ENCODE measurements at regions of chr21 and their contacts with region 1.

Region 1: GRCh38 chr21:42309753-42310221 is 5.4 kb downstream of the TFF3 start:
- DNase-seq: peak; percentile 30
- H3K4me3 ChIP-seq: no peak overlapping the region
- H3K27ac ChIP-seq: no peak overlapping the region
- H3K4me1 ChIP-seq: no peaks in the 10 kb centered on the region
- H3K27me3 ChIP-seq: peaks cover 2 to 6% of the 10 kb centered on the region in 2 experiments
- CTCF ChIP-seq: peak; percentile 71 to 88
- POLR2A ChIP-seq: no peak

Region 2: DNA sequence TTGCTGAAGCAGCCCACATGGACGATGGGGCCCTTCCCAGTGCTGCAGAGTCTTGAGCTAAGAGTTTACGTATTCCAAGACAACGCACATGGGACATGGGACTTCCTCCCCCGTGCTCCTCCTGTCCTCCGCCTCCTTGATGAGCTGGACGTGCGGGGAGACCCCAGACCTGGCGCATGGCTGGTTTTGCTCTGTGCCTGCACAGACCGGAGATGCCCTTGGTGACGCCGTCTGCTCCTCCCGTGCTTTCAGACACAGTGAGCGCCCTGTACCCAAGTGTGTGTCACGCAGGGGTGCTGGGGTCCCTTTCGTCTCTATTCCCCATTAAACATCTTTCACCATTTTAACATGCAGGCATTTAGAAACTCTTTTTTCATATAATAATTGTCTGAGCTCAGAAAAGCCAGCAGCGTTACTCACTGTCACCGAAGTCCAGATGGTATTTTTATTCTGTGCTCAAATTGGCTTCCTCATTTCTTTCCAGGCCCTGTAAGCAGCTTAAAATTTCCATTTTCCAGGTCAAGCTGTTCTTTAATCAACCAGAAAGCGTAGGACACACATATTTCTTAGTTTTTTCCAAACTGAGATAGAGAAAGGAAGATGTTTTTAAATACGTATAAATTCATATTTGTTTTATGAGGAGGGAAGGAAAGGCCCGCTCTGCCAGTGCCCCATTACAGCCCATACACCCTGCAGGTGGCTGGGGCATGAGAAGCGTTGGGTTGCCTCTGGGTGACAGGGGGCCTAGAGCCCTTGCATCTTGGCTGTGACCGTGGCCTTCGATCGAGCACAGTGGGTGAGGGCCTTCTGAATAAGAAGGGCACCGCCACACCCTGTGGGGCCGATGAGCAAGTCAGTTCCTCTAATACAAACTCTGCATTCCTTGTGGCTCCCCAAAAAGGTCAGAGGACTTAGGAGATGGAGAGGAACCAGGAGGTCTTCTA is 281.7 kb before region 1 on chr21:
- CTCF ChIA-PET with region 1: no interaction called
- POLR2A ChIA-PET with region 1: no interaction called
- dilution Hi-C with region 1: no loop called
- intact Hi-C with region 1: no loop called
- DNase-seq: no peak
- H3K4me3 ChIP-seq: no peak overlapping the region
- H3K27ac ChIP-seq: no peak overlapping the region
- H3K4me1 ChIP-seq: peaks cover 5% of the 10 kb centered on the region
- H3K27me3 ChIP-seq: peaks cover 0 to 5% of the 10 kb centered on the region in 2 experiments
- CTCF ChIP-seq: no peak
- POLR2A ChIP-seq: no peak

Region 3: DNA sequence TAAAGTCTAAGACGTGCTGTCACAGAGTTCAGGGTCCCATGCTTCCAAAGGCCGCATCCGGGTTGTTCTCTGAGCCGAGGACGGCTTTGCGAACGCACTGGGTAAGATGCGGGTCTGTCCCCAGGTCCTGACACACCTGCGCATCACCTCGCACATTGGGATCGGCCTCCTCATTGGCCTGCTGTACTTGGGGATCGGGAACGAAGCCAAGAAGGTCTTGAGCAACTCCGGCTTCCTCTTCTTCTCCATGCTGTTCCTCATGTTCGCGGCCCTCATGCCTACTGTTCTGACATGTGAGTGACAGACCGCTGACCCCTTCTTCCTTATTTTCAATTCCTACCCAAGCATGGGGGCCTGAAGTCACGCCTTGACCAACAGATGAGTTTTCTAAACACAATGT is 19.9 kb before region 1 on chr21:
- CTCF ChIA-PET with region 1: interaction called, 14 read pairs
- POLR2A ChIA-PET with region 1: no interaction called
- dilution Hi-C with region 1: no loop called
- intact Hi-C with region 1: no loop called
- DNase-seq: no peak
- H3K4me3 ChIP-seq: no peak overlapping the region
- H3K27ac ChIP-seq: no peak overlapping the region
- H3K4me1 ChIP-seq: no peaks in the 10 kb centered on the region
- H3K27me3 ChIP-seq: no peaks in the 10 kb centered on the region
- CTCF ChIP-seq: no peak
- POLR2A ChIP-seq: no peak

Region 4: DNA sequence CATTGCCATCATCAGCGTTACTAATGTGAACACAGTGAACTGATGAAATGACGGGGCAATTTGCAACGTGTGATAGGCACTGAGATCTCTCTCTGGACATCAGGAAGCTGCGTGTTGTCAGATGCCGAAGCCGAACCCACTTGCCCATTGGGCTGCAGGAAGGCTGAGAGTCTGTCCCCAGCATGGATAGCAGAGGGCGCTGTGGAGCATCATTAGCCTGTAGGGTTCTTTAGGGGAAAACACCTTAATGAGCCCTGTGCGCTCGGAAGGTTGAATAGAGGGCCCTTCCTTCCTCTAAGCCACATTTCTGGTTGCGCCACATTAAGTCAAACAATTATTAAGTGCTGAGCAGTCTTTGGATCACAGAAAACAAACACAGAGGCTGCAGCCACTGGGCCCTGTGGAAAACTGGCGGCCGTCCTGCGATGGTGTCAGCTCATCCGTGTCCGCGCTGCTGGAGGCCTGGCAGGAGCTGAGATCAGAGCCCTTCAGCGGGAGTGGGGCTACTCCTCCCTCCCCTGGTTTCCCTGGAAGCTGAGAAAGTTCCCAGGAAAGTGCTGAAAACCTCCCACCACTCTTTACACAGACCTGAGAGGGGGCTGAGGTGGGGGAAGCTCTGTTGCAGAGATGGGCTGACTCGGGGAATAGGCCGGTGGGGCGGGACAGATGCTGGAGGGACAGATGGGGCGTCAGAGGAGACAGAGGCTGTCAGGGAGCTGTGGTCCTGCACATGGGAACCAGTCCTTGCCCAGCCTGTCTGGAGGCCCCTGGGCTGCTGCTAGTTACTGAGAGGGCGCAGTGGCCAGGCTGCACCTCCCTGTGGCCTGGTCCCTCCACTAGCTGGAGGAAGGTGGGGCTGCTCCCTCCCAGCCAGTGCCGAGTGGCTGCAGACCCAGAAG is 28.3 kb after region 1 on chr21:
- CTCF ChIA-PET with region 1: interaction called, 10 read pairs
- POLR2A ChIA-PET with region 1: no interaction called
- dilution Hi-C with region 1: no loop called
- intact Hi-C with region 1: no loop called
- DNase-seq: peak; percentile 53
- H3K4me3 ChIP-seq: no peak overlapping the region
- H3K27ac ChIP-seq: no peak overlapping the region
- H3K4me1 ChIP-seq: no peaks in the 10 kb centered on the region
- H3K27me3 ChIP-seq: peaks cover 10 to 32% of the 10 kb centered on the region in 2 experiments
- CTCF ChIP-seq: peak; percentile 59 to 62
- POLR2A ChIP-seq: no peak